Transverse colon (tissue), 4 donors: ENCODE measurements at regions of chr7 and their contacts with region 1.

Region 1: DNA sequence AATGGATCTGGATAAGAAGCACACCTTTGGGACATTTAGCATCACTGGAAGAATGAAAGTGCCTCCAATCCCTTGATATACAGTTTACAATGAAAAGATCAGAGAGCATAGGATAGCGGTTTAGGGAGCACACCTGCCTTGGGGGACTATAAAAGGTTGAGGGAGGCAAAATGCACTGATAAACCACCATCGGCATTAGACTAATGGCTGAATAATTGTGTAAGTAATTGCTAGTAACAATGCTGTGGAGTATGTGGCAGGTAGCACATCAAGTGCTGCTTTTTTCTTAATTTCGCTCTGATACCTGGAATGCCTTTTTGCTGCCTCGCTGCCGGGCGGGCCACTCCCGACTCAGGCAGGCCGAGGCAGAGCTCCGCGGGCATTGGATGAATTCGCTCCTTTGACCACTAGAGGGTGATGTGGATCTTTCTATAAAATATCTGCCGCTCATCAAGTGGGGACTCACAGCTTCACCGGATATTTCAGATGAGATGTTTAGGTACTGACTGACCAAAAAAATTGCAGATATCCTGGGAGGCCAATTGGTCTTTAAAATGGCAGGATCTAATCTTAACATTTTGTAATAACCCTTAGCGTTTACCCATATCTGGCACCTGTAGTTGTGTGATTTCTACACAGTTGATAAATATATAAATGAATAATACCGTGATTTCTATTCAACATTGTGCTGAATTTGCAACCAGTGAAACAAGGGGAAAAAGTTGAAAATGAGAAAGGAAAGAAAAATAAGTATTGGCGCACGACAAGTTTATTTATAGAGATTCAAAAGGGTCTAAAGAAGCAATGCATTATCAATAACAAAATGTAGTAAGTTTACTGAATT is 116.8 kb upstream of the PRSS1 start:
- DNase-seq: peak; percentile 54
- H3K4me3 ChIP-seq: no peak overlapping the region
- H3K27ac ChIP-seq: no peak overlapping the region
- H3K4me1 ChIP-seq: no peaks in the 10 kb centered on the region
- H3K27me3 ChIP-seq: peaks cover 37% of the 10 kb centered on the region
- CTCF ChIP-seq: peak; percentile 66 to 77 (median 71)
- EP300 ChIP-seq: no peak
- POLR2A ChIP-seq: no peak

Region 2: GRCh38 chr7:142771353-142771723 is 138.8 kb after region 1 on chr7:
- in situ Hi-C with region 1: loop called in 3 of 4 experiments (anchors 10 to 25 kb)
- intact Hi-C with region 1: no loop called
- DNase-seq: no peak
- H3K4me3 ChIP-seq: no peak overlapping the region
- H3K27ac ChIP-seq: no peak overlapping the region
- H3K4me1 ChIP-seq: no peaks in the 10 kb centered on the region
- H3K27me3 ChIP-seq: no peaks in the 10 kb centered on the region
- CTCF ChIP-seq: no peak
- EP300 ChIP-seq: no peak
- POLR2A ChIP-seq: no peak

Region 3: GRCh38 chr7:142782922-142783900 is 150.7 kb after region 1 on chr7:
- in situ Hi-C with region 1: loop called (anchors 10 to 25 kb)
- intact Hi-C with region 1: no loop called
- DNase-seq: peak; percentile 90
- H3K4me3 ChIP-seq: peak overlapping the region in 3 of 4 donors; percentile 0 to 32 (median 16)
- H3K27ac ChIP-seq: no peak overlapping the region
- H3K4me1 ChIP-seq: peaks cover 0 to 4% (median 0%) of the 10 kb centered on the region in 4 donors
- H3K27me3 ChIP-seq: peaks cover 9% of the 10 kb centered on the region
- CTCF ChIP-seq: peak; percentile 88 to 96 (median 92)
- EP300 ChIP-seq: no peak
- POLR2A ChIP-seq: no peak